ENCODE measurements at regions of chrX and their contacts with region 1.

Region 1: DNA sequence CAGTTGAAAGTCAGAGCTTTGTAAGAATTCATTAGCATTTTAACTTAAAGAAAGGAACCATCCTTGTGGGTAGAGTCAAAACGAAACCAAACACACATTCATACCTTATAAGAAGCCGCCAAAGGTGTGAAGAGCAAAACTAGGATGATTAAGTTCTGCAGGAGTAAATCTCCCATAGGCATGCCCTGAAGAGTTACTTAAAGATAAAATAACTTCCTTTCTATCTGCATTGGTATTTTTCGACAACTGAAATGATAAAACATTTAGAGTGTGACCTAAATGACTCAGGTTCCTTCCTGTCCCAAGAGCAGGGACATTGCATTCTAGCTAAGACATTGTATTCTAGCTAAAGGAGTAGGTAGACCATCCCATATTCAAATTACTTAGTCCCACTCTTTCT is 75.3 kb downstream of the BCOR start:
- DNase-seq: no peak
- H3K4me3 Mint-ChIP-seq: peak overlapping the region; percentile 29
- H3K27ac Mint-ChIP-seq: peak overlapping the region; percentile 43
- H3K4me1 Mint-ChIP-seq: peaks cover 29% of the 10 kb centered on the region
- H3K27me3 Mint-ChIP-seq: no peaks in the 10 kb centered on the region

Region 2: DNA sequence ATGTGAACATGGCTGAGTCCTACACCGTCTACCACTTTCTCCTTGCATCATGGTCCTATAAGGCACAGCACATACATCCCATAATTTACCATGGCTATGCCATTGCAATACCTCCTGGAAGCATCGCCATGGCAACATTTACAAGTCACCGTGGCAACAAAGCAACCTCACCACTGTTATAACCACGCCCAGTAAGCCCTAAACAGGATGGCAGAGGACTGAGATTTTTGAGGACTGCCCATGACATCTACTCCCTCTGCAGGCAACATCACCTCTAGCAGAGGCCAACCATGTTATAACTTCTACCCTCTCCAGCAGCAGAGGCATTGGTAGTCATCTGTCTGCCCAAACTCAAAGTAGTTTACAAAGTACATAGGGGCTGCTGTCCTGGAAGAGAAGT is 45.6 kb after region 1 on chrX:
- intact Hi-C with region 1: loop called (anchors 1 kb)
- DNase-seq: peak; percentile 17
- H3K4me3 Mint-ChIP-seq: no peak overlapping the region
- H3K27ac Mint-ChIP-seq: peak overlapping the region; percentile 50
- H3K4me1 Mint-ChIP-seq: peaks cover 67% of the 10 kb centered on the region
- H3K27me3 Mint-ChIP-seq: no peaks in the 10 kb centered on the region

Region 3: GRCh38 chrX:40108959-40109287 is 86.5 kb after region 1 on chrX:
- intact Hi-C with region 1: no loop called
- DNase-seq: peak; percentile 30
- H3K4me3 Mint-ChIP-seq: no peak overlapping the region
- H3K27ac Mint-ChIP-seq: no peak overlapping the region
- H3K4me1 Mint-ChIP-seq: peaks cover 6% of the 10 kb centered on the region
- H3K27me3 Mint-ChIP-seq: peaks cover 3% of the 10 kb centered on the region

Measured in activated T-helper 1 cell treated with anti-CD3 and anti-CD28 coated beads, Interleukin-12 subunit alpha, Interleukin-12 subunit beta, Interleukin-2, Interleukin-4 antibody, amounts not matched to agents 30 ng/mL and 10 ng/mL and 1 ng/mL, durations not matched to agents 14 hours and 24 hours and 36 hours (primary cell).